Natural killer cell (primary cell): ENCODE measurements at regions of chr4 and their contacts with region 1.

Region 1: GRCh38 chr4:109406338-109406931 is 27.2 kb upstream of the SEC24B start:
- DNase-seq: peak in 1 of 2 donors; percentile 74
- ATAC-seq: peak; percentile 73 to 81 (median 76)
- H3K4me3 ChIP-seq: no peak overlapping the region
- H3K4me3 Mint-ChIP-seq: no peak overlapping the region
- H3K27ac ChIP-seq: no peak overlapping the region
- H3K27ac Mint-ChIP-seq: no peak overlapping the region
- H3K4me1 ChIP-seq: no peaks in the 10 kb centered on the region
- H3K4me1 Mint-ChIP-seq: no peaks in the 10 kb centered on the region
- H3K27me3 ChIP-seq: peaks cover 4% of the 10 kb centered on the region
- H3K27me3 Mint-ChIP-seq: peaks cover 10 to 14% of the 10 kb centered on the region in 2 donors
- CTCF ChIP-seq: peak; percentile 66

Region 2: GRCh38 chr4:108018040-108018883 is 1388.2 kb before region 1 on chr4:
- intact Hi-C with region 1: loop called (anchors 1 kb)
- DNase-seq: peak; percentile 70 to 90
- ATAC-seq: peak; percentile 65 to 75 (median 68)
- H3K4me3 ChIP-seq: no peak overlapping the region
- H3K4me3 Mint-ChIP-seq: no peak overlapping the region
- H3K27ac ChIP-seq: no peak overlapping the region
- H3K27ac Mint-ChIP-seq: no peak overlapping the region
- H3K4me1 ChIP-seq: peaks cover 2% of the 10 kb centered on the region
- H3K4me1 Mint-ChIP-seq: peaks cover 0 to 6% of the 10 kb centered on the region in 2 donors
- H3K27me3 ChIP-seq: no peaks in the 10 kb centered on the region
- H3K27me3 Mint-ChIP-seq: no peaks in the 10 kb centered on the region
- CTCF ChIP-seq: peak; percentile 83

Region 3: GRCh38 chr4:108683479-108683878 is 723.0 kb before region 1 on chr4:
- intact Hi-C with region 1: loop called (anchors 5 kb)
- DNase-seq: peak in 1 of 2 donors; percentile 23
- ATAC-seq: no peak
- H3K4me3 ChIP-seq: no peak overlapping the region
- H3K4me3 Mint-ChIP-seq: no peak overlapping the region
- H3K27ac ChIP-seq: no peak overlapping the region
- H3K27ac Mint-ChIP-seq: no peak overlapping the region
- H3K4me1 ChIP-seq: no peaks in the 10 kb centered on the region
- H3K4me1 Mint-ChIP-seq: no peaks in the 10 kb centered on the region
- H3K27me3 ChIP-seq: no peaks in the 10 kb centered on the region
- H3K27me3 Mint-ChIP-seq: peaks cover 3 to 15% of the 10 kb centered on the region in 2 donors
- CTCF ChIP-seq: no peak